GM12878 (cell line): ENCODE measurements at regions of chr10 and their contacts with region 1.

Region 1: DNA sequence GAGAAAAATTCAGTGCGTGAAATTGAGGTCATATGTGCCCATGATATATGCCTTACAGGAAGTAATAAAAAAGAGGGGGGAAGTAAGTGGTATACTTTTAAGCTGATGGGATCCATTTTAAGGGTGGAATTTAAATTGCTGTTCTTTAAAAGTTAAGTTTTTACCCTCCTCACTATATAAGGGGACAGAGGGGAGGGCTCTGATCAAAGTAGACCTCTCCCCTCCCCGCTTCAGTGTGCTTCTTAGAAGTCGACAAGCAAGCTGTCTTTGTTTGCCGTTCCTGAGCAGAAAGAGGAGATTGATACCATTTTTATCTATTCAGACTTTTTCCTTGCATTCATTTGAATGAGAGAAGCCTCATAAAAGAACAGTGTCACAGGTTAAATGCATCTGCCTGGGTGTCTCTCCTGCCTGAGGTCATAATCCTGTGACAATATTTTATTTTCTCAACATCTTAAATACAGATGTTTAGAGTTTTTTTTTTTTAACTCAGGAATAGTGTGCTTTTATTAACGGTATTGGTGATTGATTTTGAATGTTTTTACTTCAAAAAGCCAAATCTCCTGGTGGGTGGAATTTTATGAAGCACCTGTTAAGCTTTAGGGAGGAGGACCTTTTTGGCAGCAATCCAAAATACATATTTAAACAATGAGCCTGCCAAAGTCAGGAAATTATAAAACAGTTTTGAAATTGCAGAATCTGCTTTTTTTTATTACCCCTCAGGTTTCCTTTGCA is 141.7 kb downstream of the KAT6B start:
- DNase-seq: no peak
- ATAC-seq: no peak
- H3K4me3 ChIP-seq: no peak overlapping the region
- H3K27ac ChIP-seq: no peak overlapping the region
- H3K4me1 ChIP-seq: peaks cover 7% of the 10 kb centered on the region
- H3K27me3 ChIP-seq: no peaks in the 10 kb centered on the region
- CTCF ChIP-seq: no peak
- EP300 ChIP-seq: no peak
- POLR2A ChIP-seq: no peak
- RAD21 ChIP-seq: no peak

Region 2: DNA sequence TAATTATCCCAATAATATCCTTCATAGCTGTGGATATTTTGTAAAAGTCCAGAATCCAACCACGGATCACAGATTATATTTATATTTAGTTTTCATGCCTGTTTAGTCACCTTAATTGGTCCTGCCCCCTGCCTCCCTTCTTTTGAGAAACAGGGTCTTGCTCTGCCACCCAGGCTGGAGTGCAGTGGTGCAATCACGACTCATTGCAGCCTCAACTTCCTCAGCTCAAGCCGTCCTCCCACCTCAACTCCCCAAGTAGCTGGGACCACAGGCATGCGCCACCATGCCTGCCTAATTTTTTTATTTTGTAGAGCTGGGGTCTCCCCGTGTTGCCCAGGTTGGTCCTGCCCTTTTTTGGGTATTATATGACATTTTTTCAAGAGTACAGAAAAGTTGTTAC is 12.3 kb before region 1 on chr10:
- CTCF ChIA-PET with region 1: no interaction called
- POLR2A ChIA-PET with region 1: interaction called, 3 read pairs
- RAD21 ChIA-PET with region 1: no interaction called
- SMC1A ChIA-PET with region 1: interaction called, 12 read pairs
- in situ Hi-C with region 1: no loop called
- intact Hi-C with region 1: no loop called
- DNase-seq: no peak
- ATAC-seq: no peak
- H3K4me3 ChIP-seq: no peak overlapping the region
- H3K27ac ChIP-seq: no peak overlapping the region
- H3K4me1 ChIP-seq: no peaks in the 10 kb centered on the region
- H3K27me3 ChIP-seq: no peaks in the 10 kb centered on the region
- CTCF ChIP-seq: no peak
- EP300 ChIP-seq: no peak
- POLR2A ChIP-seq: no peak
- RAD21 ChIP-seq: no peak